H1 (cell line): ENCODE measurements at regions of chr2 and their contacts with region 1.

Region 1: GRCh38 chr2:169159686-169160085 is 90.3 kb downstream of the DHRS9 start:
- DNase-seq: no peak
- H3K4me3 ChIP-seq: no peak overlapping the region
- H3K27ac ChIP-seq: no peak overlapping the region
- H3K4me1 ChIP-seq: no peaks in the 10 kb centered on the region
- H3K27me3 ChIP-seq: no peaks in the 10 kb centered on the region
- CTCF ChIP-seq: no peak
- EP300 ChIP-seq: no peak
- POLR2A ChIP-seq: no peak
- RAD21 ChIP-seq: no peak

Region 2: DNA sequence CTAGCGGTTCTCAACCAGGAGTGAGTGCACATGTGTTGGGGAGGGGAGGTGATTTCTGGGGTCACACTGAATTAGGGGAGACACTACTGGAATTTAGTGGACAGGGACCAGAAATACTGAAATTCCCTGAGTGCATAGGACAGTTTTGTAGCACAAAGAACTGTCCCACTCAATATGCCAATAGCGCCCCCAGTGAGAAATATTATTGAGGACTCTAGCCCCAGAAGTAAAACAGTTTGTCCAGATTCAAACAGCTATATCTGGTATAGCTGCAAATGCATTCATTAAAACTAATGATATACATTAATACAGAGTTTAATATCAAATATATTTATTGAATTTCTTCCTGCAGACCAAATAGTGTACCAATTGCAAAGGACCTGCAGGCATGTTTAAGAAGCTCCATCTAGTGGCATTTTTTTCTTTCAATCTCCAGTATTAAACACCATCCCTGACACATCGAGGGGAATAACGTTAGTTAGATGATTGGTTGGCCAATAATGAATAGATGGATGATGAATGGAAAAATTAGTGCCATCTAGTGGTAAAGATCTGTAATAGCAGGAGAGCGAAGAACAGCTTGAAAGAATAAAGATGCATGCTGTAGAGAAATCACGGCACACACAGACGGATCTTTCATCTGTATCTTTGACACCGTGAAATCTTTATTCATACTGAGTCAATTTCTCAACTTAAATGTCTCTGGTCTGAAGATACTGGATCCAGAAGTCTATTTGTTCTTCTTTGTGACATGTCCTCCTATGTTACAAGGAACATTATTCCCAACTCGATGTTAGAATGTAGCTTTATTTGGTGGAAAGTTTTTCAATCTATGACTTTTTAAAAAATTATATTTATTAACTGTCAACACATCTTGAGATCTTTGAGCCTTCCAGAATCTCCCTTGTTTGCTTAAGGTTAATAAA is 27.8 kb before region 1 on chr2:
- CTCF ChIA-PET with region 1: interaction called, 14 read pairs
- POLR2A ChIA-PET with region 1: no interaction called
- DNase-seq: no peak
- H3K4me3 ChIP-seq: no peak overlapping the region
- H3K27ac ChIP-seq: no peak overlapping the region
- H3K4me1 ChIP-seq: no peaks in the 10 kb centered on the region
- H3K27me3 ChIP-seq: no peaks in the 10 kb centered on the region
- CTCF ChIP-seq: peak in 2 of 3 experiments; percentile 39 to 71; a peak in 2 of 4 replicates
- EP300 ChIP-seq: no peak
- POLR2A ChIP-seq: no peak
- RAD21 ChIP-seq: peak; percentile 34 to 44

Region 3: DNA sequence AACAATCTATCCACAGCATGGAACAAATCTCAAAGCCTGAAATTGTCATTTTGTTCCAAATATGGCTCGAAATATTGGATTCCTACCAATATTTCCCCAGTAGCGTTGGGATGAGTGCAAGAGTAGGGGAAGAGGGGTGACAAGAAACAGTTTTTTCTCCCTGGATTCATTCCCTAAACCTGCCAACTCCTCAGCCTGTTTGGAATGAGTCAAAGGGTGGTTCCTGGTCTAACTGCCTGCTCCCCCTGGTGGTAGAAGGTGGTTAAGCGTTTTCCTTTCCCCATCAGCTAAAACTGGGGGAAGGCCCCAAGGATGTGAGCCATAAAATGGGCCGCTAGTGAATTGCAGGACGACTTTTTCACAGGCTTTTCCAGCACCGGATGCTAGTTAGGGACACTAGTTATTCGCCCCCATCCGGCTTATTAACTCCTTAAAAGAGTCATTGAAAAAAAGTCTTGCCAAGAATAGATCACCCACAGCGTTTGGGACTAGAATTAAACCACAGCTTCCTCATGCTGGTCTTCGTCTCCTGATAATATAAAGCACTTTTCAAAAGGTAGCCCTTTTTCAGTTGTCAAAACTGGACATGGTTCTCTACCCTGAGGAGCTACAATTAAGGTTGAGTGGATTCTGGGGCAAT is 17.9 kb before region 1 on chr2:
- CTCF ChIA-PET with region 1: interaction called, 20 read pairs
- POLR2A ChIA-PET with region 1: no interaction called
- DNase-seq: peak; percentile 31 to 90
- H3K4me3 ChIP-seq: no peak overlapping the region
- H3K27ac ChIP-seq: no peak overlapping the region
- H3K4me1 ChIP-seq: peaks cover 0 to 10% (median 7%) of the 10 kb centered on the region in 4 experiments; a peak in 5 of 7 replicates
- H3K27me3 ChIP-seq: no peaks in the 10 kb centered on the region
- CTCF ChIP-seq: peak; percentile 75 to 94 (median 76)
- EP300 ChIP-seq: no peak
- POLR2A ChIP-seq: no peak
- RAD21 ChIP-seq: peak; percentile 55 to 70

Region 4: GRCh38 chr2:169173876-169174275 is 14.2 kb after region 1 on chr2:
- CTCF ChIA-PET with region 1: no interaction called
- POLR2A ChIA-PET with region 1: no interaction called
- DNase-seq: no peak
- H3K4me3 ChIP-seq: no peak overlapping the region
- H3K27ac ChIP-seq: no peak overlapping the region
- H3K4me1 ChIP-seq: no peaks in the 10 kb centered on the region
- H3K27me3 ChIP-seq: no peaks in the 10 kb centered on the region
- CTCF ChIP-seq: no peak
- EP300 ChIP-seq: no peak
- POLR2A ChIP-seq: no peak
- RAD21 ChIP-seq: no peak